ENCODE measurements at regions of chr1 and their contacts with region 1.

Region 1: DNA sequence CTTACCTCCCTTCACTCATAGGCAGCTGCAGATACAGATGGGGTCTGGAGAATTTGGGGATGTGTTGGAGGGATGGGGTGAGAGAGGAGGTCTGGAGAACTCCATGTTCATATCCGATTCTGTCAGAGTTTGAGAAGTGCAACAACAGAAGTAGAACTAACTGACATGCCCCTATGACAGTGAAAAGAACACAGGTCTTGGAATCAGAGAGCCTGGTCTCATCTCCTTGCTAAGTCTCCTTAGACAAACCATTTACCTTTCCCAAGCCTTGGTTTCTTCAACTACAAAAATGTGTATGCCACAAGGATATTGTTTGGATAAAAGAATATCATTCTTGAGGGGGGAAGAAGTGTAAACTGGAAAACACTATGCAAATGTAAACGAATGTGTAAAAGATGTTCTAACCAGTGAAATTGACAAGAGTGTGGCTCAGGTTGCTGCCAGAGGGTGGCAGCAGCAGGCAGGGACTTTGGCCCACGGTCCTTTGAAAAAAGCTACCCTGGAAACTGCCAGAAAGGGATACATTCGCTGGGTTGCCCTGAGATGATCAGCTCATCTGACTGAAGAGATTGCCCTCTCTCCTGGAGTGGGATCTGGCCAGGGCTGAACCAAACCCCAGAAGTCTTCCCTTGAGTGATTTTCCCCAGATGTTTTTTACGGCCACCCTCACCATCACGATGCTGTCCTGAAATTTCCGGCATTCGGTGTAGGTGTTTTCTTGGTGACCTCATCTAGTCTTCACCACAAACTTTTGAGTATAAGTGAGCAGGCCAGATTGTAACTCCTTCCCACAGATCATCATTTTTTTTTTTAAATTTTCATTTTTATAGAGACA is 17.0 kb upstream of the CD2 start:
- DNase-seq: peak; percentile 82 to 85 (median 83)
- H3K4me3 ChIP-seq: peak overlapping the region in 1 of 2 donors; percentile 44
- H3K4me3 Mint-ChIP-seq: peak overlapping the region; percentile 50 to 80 (median 74)
- H3K27ac ChIP-seq: peak overlapping the region; percentile 97
- H3K27ac Mint-ChIP-seq: peak overlapping the region; percentile 97 to 100 (median 99)
- H3K4me1 ChIP-seq: peaks cover 49% of the 10 kb centered on the region
- H3K4me1 Mint-ChIP-seq: peaks cover 41 to 55% (median 46%) of the 10 kb centered on the region in 4 donors
- H3K27me3 ChIP-seq: no peaks in the 10 kb centered on the region
- H3K27me3 Mint-ChIP-seq: no peaks in the 10 kb centered on the region

Region 2: GRCh38 chr1:116232989-116233514 is 504.2 kb before region 1 on chr1:
- CTCF ChIA-PET with region 1: no interaction called
- POLR2A ChIA-PET with region 1: no interaction called
- intact Hi-C with region 1: no loop called
- DNase-seq: peak; percentile 34 to 51 (median 44)
- H3K4me3 ChIP-seq: no peak overlapping the region
- H3K4me3 Mint-ChIP-seq: no peak overlapping the region
- H3K27ac ChIP-seq: no peak overlapping the region
- H3K27ac Mint-ChIP-seq: peak overlapping the region in 4 of 7 donors; percentile 47 to 83 (median 68)
- H3K4me1 ChIP-seq: peaks cover 10% of the 10 kb centered on the region
- H3K4me1 Mint-ChIP-seq: peaks cover 15 to 23% (median 20%) of the 10 kb centered on the region in 4 donors
- H3K27me3 ChIP-seq: no peaks in the 10 kb centered on the region
- H3K27me3 Mint-ChIP-seq: no peaks in the 10 kb centered on the region

Region 3: DNA sequence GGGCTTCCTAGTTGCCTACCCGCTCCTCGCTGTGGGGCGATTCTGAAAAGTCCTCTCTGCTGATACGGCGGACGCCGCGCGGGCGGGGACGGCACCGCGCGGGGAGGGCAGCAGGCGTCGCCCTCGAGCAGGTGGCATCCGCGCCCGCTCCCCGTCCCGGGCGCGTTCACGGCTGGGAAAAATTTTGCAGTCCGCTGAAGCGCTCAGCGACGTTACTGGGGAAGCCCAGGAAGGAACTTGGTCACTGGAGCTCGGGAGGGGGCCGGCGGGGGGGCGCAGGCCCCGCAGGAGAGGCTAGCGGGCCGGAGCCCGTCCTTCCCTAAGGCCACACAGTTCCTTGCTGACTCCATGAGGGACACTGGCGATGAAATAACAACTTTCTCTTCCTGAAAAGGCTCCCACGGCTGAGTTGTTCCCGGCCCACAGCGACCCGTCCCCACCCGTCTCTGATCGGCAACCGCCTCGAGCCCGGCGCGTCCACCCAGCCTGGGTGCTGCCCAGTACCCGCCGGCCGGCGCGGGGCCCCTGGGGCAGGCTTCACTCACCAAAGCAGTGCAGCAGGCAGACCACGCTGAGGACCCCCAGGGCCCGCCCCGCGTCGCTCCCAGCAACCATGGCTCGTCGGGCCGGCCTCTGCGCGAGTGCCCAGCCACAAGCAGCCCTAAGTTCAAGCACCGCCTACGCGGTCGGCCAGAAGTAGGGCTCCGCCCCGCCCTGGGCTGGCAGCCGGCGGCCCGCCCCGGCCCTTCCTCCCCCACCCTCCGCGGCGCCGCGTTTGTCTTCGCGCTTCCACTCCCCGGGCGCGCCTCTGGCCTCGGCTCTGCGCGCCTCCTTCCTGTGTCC is 166.7 kb before region 1 on chr1 and contains the start of gene CD58:
- CTCF ChIA-PET with region 1: interaction called, 5 read pairs
- POLR2A ChIA-PET with region 1: no interaction called
- intact Hi-C with region 1: loop called (anchors 5 kb)
- DNase-seq: peak; percentile 74 to 81 (median 75)
- H3K4me3 ChIP-seq: peak within 1 kb of the TSS; percentile 80 to 93
- H3K4me3 Mint-ChIP-seq: peak within 1 kb of the TSS; percentile 89 to 99 (median 94)
- H3K27ac ChIP-seq: peak within 1 kb of the TSS; percentile 93
- H3K27ac Mint-ChIP-seq: peak within 1 kb of the TSS; percentile 90 to 98 (median 97)
- H3K4me1 ChIP-seq: peaks cover 62% of the 10 kb centered on the region
- H3K4me1 Mint-ChIP-seq: peaks cover 35 to 64% (median 49%) of the 10 kb centered on the region in 4 donors
- H3K27me3 ChIP-seq: no peaks in the 10 kb centered on the region
- H3K27me3 Mint-ChIP-seq: peaks cover 0 to 2% of the 10 kb centered on the region in 2 donors
- total RNA-seq, gene CD58: 25.2 to 30.9 TPM

Region 4: DNA sequence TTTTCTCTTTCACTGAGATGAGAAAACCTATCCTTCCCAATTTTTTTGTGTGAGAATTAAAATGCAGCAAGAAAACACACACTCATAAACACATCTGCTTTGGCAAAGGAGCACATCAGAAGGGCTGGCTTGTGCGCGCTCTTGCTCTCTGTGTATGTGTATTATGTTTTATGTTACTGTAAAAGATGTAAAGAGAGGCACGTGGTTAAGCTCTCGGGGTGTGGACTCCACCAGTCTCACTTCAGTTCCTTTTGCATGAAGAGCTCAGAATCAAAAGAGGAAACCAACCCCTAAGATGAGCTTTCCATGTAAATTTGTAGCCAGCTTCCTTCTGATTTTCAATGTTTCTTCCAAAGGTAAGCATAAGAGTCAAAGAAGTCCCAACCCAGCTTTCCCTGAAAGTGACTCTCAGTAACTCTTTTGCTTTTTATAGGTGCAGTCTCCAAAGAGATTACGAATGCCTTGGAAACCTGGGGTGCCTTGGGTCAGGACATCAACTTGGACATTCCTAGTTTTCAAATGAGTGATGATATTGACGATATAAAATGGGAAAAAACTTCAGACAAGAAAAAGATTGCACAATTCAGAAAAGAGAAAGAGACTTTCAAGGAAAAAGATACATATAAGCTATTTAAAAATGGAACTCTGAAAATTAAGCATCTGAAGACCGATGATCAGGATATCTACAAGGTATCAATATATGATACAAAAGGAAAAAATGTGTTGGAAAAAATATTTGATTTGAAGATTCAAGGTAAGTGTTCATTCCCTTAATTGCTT is 17.2 kb after region 1 on chr1 and contains the start of gene CD2:
- CTCF ChIA-PET with region 1: interaction called, 114 read pairs
- POLR2A ChIA-PET with region 1: interaction called, 1,832 read pairs
- intact Hi-C with region 1: loop called (anchors 1 kb)
- DNase-seq: peak; percentile 66 to 74 (median 71)
- H3K4me3 ChIP-seq: peak within 1 kb of the TSS; percentile 53 to 72
- H3K4me3 Mint-ChIP-seq: peak within 1 kb of the TSS; percentile 96 to 100 (median 98)
- H3K27ac ChIP-seq: peak within 1 kb of the TSS; percentile 88
- H3K27ac Mint-ChIP-seq: peak within 1 kb of the TSS; percentile 96 to 100 (median 99)
- H3K4me1 ChIP-seq: peaks cover 34% of the 10 kb centered on the region
- H3K4me1 Mint-ChIP-seq: peaks cover 25 to 64% (median 33%) of the 10 kb centered on the region in 4 donors
- H3K27me3 ChIP-seq: no peaks in the 10 kb centered on the region
- H3K27me3 Mint-ChIP-seq: no peaks in the 10 kb centered on the region
- total RNA-seq, gene CD2: 305 to 316 TPM

Region 5: GRCh38 chr1:116794804-116795481 is 57.7 kb after region 1 on chr1:
- CTCF ChIA-PET with region 1: interaction called, 26 read pairs
- POLR2A ChIA-PET with region 1: interaction called, 170 read pairs
- intact Hi-C with region 1: no loop called
- DNase-seq: no peak
- H3K4me3 ChIP-seq: no peak overlapping the region
- H3K4me3 Mint-ChIP-seq: no peak overlapping the region
- H3K27ac ChIP-seq: no peak overlapping the region
- H3K27ac Mint-ChIP-seq: peak overlapping the region in 2 of 7 donors; percentile 3 to 71
- H3K4me1 ChIP-seq: peaks cover 57% of the 10 kb centered on the region
- H3K4me1 Mint-ChIP-seq: peaks cover 36 to 74% (median 58%) of the 10 kb centered on the region in 4 donors
- H3K27me3 ChIP-seq: no peaks in the 10 kb centered on the region
- H3K27me3 Mint-ChIP-seq: no peaks in the 10 kb centered on the region

Region 6: GRCh38 chr1:116826818-116827606 is 89.8 kb after region 1 on chr1:
- CTCF ChIA-PET with region 1: interaction called, 20 read pairs
- POLR2A ChIA-PET with region 1: interaction called, 8 read pairs
- intact Hi-C with region 1: no loop called
- DNase-seq: peak in 3 of 5 donors; percentile 23 to 84 (median 38)
- H3K4me3 ChIP-seq: no peak overlapping the region
- H3K4me3 Mint-ChIP-seq: peak overlapping the region in 4 of 8 donors; percentile 48 to 66 (median 54)
- H3K27ac ChIP-seq: peak overlapping the region; percentile 27
- H3K27ac Mint-ChIP-seq: peak overlapping the region; percentile 71 to 90 (median 88)
- H3K4me1 ChIP-seq: peaks cover 21% of the 10 kb centered on the region
- H3K4me1 Mint-ChIP-seq: peaks cover 16 to 31% (median 24%) of the 10 kb centered on the region in 4 donors
- H3K27me3 ChIP-seq: no peaks in the 10 kb centered on the region
- H3K27me3 Mint-ChIP-seq: no peaks in the 10 kb centered on the region

Region 7: GRCh38 chr1:116987256-116987555 is 250.0 kb after region 1 on chr1:
- CTCF ChIA-PET with region 1: interaction called, 16 read pairs
- POLR2A ChIA-PET with region 1: interaction called, 13 read pairs
- intact Hi-C with region 1: loop called (anchors 5 kb)
- DNase-seq: peak; percentile 64 to 78 (median 74)
- H3K4me3 ChIP-seq: peak overlapping the region; percentile 44 to 59
- H3K4me3 Mint-ChIP-seq: peak overlapping the region; percentile 83 to 94 (median 88)
- H3K27ac ChIP-seq: peak overlapping the region; percentile 51
- H3K27ac Mint-ChIP-seq: peak overlapping the region; percentile 74 to 98 (median 95)
- H3K4me1 ChIP-seq: peaks cover 34% of the 10 kb centered on the region
- H3K4me1 Mint-ChIP-seq: peaks cover 25 to 42% (median 31%) of the 10 kb centered on the region in 4 donors
- H3K27me3 ChIP-seq: no peaks in the 10 kb centered on the region
- H3K27me3 Mint-ChIP-seq: no peaks in the 10 kb centered on the region

Measured in CD4-positive, alpha-beta memory T cell (primary cell).